ENCODE measurements at regions of chr14 and their contacts with region 1.

Region 1: DNA sequence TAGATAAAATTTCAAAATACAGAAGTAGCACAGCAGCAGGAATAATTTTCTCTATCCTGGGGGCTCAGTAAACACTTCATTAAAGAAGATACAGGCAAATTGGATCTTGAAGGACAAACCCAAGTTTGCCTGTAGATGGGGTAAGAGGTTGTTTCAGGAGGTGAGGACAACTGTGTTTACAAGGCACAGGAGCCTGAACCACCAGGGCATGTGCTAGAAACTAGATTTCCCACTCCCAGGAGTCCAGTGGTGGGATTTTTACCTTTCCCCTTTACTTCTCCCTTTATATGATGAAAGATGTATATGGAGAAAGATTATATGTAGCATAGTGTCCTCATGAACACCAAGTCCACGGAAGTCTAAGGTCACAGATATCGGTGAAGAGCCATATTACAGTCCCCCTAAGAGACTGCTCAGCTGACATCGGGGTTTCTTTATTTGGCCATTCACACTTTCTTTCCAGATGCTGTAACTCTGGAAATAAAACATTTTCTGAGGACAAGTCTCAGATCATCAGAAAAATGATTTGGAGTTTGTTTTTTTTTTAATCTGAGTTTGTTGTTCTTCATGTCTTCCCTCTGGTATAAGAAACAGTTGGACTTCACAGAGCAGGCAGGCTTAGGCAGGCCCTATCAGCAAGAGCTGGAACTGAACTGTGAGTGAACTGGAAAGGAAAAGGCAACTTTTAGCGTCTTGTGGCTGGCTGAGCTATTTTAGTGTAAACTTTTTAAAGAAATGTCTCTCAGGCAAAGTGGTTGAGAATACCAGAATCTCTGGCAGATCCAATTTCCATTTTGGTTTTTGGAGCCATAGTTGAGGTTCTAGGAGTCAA is 8.0 kb upstream of the EVL start:
- DNase-seq: peak in 7 of 9 donors; percentile 62 to 76 (median 67)
- ATAC-seq: peak; percentile 83
- H3K4me3 ChIP-seq: no peak overlapping the region
- H3K4me3 Mint-ChIP-seq: peak overlapping the region; percentile 35 to 79 (median 72)
- H3K27ac ChIP-seq: peak overlapping the region; percentile 33
- H3K27ac Mint-ChIP-seq: peak overlapping the region; percentile 83 to 96 (median 94)
- H3K4me1 ChIP-seq: peaks cover 49% of the 10 kb centered on the region in 2 donors
- H3K4me1 Mint-ChIP-seq: peaks cover 37 to 70% (median 60%) of the 10 kb centered on the region in 7 donors
- H3K27me3 ChIP-seq: no peaks in the 10 kb centered on the region
- H3K27me3 Mint-ChIP-seq: no peaks in the 10 kb centered on the region

Region 2: DNA sequence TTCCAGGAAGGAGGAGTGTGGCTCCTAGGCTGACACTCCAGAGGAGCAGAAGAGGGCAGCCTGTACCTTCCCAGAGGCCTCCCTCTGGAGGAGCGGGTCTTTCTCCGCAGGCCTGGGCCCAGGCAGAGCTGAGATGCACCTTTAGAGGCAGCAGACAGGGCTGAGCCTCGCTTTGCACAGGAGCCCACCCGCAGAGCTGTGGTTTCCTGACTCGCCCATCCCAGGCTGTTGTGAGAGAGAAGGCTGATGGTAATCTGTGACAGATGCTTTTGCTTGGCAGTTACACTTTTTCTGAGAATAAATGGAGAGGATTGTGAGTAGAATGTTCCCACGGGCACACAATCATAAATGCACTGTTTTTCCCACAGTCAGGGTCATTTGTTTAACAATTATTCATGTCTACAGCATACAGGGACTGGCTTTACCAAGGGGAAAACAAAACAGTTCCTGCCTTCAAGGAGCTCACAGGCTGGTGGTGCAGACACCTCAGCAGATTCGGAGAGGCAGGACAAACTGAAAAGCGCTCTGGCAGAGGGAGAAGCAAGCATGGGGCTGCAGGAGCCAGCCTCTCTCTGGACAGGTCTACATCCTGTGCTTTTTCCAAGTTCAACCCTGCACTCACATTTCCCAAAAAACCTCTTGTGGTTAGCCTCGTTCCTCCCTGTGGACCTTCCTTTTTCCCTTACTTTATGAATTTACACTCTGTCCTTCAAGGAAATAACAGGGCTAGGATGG is 22.0 kb after region 1 on chr14:
- CTCF ChIA-PET with region 1: interaction called, 25 read pairs
- POLR2A ChIA-PET with region 1: interaction called, 2,344 read pairs
- intact Hi-C with region 1: loop called in 1 of 2 experiments (anchors 1 kb)
- DNase-seq: peak; percentile 53 to 93 (median 90)
- ATAC-seq: peak; percentile 83
- H3K4me3 ChIP-seq: peak overlapping the region; percentile 39
- H3K4me3 Mint-ChIP-seq: peak overlapping the region; percentile 78 to 98 (median 87)
- H3K27ac ChIP-seq: peak overlapping the region; percentile 98
- H3K27ac Mint-ChIP-seq: peak overlapping the region; percentile 89 to 100 (median 98)
- H3K4me1 ChIP-seq: peaks cover 88 to 100% of the 10 kb centered on the region in 2 donors
- H3K4me1 Mint-ChIP-seq: peaks cover 83 to 99% (median 96%) of the 10 kb centered on the region in 7 donors
- H3K27me3 ChIP-seq: no peaks in the 10 kb centered on the region
- H3K27me3 Mint-ChIP-seq: no peaks in the 10 kb centered on the region

Region 3: GRCh38 chr14:100155042-100155846 is 98.1 kb after region 1 on chr14:
- CTCF ChIA-PET with region 1: no interaction called
- POLR2A ChIA-PET with region 1: no interaction called
- intact Hi-C with region 1: loop called in 1 of 2 experiments (anchors 2 kb)
- DNase-seq: no peak
- ATAC-seq: no peak
- H3K4me3 ChIP-seq: no peak overlapping the region
- H3K4me3 Mint-ChIP-seq: peak overlapping the region in 2 of 10 donors; percentile 13 to 18
- H3K27ac ChIP-seq: no peak overlapping the region
- H3K27ac Mint-ChIP-seq: peak overlapping the region in 4 of 9 donors; percentile 17 to 54 (median 42)
- H3K4me1 ChIP-seq: no peaks in the 10 kb centered on the region
- H3K4me1 Mint-ChIP-seq: peaks cover 0 to 6% (median 2%) of the 10 kb centered on the region in 7 donors
- H3K27me3 ChIP-seq: no peaks in the 10 kb centered on the region
- H3K27me3 Mint-ChIP-seq: peaks cover 4 to 35% (median 7%) of the 10 kb centered on the region in 5 donors